A673 (cell line): ENCODE measurements at regions of chr9 and their contacts with region 1.

Region 1: DNA sequence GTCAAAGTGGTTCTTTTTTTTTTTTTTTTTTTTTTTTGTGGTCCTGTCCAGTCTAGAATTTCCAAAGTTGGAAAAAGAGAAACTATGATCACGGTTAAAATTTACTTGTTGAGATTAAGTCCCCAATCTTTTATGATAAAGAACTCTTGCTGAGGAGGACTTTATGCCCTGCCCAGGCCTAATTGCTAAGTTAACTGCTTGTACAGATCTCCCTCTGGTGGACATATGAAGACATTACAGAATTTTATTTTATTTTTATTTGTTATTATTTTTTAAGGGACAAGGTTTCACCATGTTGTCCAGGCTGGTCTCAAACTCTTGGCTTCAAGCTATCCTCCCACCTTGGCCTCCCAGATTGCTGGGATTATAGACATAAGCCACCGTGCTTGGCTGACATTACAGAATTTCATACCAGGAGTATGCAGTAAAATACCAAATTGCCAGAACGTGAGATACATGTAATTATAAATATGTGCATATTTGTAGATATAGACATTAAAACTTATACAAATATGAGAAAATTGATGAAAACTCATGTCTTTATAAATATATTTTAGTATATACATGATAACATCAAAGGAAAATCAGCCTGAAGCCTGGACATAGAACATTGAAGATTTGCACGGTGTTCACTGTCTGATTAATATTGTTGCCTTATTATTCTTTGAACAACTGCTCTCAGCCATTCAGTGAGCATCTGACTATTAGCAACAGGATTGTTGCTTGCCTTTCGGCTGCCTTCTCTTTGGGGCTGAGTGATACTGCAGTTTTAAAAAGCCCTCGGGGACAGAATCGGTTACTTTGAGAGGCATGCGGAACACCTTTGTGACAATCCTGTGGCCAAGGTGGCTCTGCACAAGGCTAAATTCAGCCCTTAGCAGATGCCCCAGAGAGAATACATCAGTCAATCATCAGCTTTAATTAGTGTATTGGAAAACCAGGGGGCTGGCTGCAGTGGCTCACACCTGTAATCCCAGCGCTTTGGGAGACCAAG is 91.0 kb downstream of the RFK start:
- DNase-seq: peak; percentile 60
- H3K4me3 ChIP-seq: no peak overlapping the region
- H3K27ac ChIP-seq: no peak overlapping the region
- H3K4me1 ChIP-seq: no peaks in the 10 kb centered on the region
- H3K27me3 ChIP-seq: peaks cover 12% of the 10 kb centered on the region
- CTCF ChIP-seq: peak; percentile 64

Region 2: DNA sequence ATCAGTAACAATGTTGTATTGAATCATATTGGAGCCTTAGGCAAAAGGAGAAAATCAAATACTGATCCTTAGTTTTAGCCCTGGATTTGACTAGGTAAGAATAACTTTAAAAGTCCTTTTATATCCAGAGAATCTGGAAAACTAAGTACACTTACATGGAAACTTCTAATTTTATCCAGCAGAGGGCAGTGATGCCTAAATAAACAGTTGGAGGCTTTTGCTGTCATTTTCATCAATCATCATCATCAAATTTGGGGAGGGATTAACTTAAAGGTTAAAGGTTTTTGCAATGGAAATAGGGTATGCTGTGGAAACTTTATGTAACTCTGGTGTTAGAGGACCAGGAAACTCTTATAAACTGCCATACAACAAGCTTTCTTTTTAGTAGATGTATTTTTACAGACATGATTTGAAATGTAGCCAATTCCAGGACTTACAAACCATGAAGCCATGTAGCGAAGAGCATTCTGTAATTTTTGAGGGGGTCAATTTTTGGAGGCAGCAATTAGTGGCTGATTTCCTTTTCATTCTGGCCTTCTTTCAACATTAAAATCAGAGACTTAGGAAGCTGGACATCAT is 1102.3 kb before region 1 on chr9:
- CTCF ChIA-PET with region 1: no interaction called
- POLR2A ChIA-PET with region 1: no interaction called
- intact Hi-C with region 1: loop called (anchors 2 kb)
- DNase-seq: peak; percentile 57
- H3K4me3 ChIP-seq: no peak overlapping the region
- H3K27ac ChIP-seq: no peak overlapping the region
- H3K4me1 ChIP-seq: no peaks in the 10 kb centered on the region
- H3K27me3 ChIP-seq: peaks cover 4% of the 10 kb centered on the region
- CTCF ChIP-seq: peak; percentile 70

Region 3: DNA sequence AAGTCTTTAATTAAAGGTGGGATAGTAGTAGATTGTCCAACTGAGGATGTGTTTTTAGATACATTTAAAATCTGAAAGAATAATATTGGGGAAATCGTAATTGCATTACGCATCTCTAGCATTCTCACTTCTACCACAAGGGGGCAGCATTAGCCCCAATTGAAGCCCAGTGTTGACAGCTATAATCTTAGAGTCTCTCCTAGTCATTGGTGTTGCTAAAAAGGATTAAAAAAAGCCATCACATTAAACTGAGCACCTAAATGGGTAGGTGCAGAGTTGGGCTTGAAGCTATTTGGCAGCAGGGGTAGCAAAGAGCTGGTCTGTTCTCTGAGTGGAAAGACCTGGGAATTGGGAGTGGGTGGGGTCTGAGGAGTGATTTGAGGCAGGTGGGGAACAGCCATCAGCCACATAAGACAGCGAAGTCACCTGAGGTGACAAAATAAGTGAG is 1037.7 kb before region 1 on chr9:
- CTCF ChIA-PET with region 1: no interaction called
- POLR2A ChIA-PET with region 1: no interaction called
- intact Hi-C with region 1: loop called (anchors 5 kb)
- DNase-seq: peak; percentile 67
- H3K4me3 ChIP-seq: no peak overlapping the region
- H3K27ac ChIP-seq: no peak overlapping the region
- H3K4me1 ChIP-seq: no peaks in the 10 kb centered on the region
- H3K27me3 ChIP-seq: no peaks in the 10 kb centered on the region
- CTCF ChIP-seq: peak; percentile 89

Region 4: GRCh38 chr9:75775166-75775565 is 528.1 kb before region 1 on chr9:
- CTCF ChIA-PET with region 1: no interaction called
- POLR2A ChIA-PET with region 1: no interaction called
- intact Hi-C with region 1: no loop called
- DNase-seq: no peak
- H3K4me3 ChIP-seq: no peak overlapping the region
- H3K27ac ChIP-seq: no peak overlapping the region
- H3K4me1 ChIP-seq: no peaks in the 10 kb centered on the region
- H3K27me3 ChIP-seq: no peaks in the 10 kb centered on the region
- CTCF ChIP-seq: no peak

Region 5: DNA sequence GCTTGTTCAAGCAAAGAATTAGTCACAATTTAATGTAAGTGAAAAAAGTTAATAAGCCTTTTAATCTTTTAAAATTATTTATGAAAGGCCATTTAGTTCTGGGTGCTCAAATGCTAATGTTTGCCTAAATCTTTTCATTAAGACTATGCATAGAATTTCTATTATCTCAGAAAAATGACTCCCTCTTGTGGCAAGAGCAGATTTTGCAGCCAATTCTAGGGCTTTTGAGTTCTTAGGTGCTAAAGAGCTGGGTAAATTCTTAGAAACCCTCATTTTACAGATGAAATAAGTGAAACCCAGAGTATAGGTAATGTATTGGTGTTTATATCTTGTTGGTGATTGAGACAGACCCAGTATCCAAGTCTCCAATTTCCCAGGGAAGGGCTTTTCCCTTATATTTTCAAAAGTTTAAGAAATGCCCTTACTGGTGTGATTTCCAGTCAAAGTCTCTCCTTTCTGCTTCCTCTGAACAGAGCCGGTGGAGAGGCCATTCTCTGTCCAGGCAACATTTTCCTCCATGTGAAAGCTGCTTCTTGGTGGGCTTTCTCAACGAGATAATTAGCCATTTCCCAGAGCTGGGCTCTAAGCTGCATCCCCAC is 436.9 kb before region 1 on chr9:
- CTCF ChIA-PET with region 1: interaction called, 3 read pairs
- POLR2A ChIA-PET with region 1: no interaction called
- intact Hi-C with region 1: loop called (anchors 10 kb)
- DNase-seq: peak; percentile 56
- H3K4me3 ChIP-seq: no peak overlapping the region
- H3K27ac ChIP-seq: no peak overlapping the region
- H3K4me1 ChIP-seq: no peaks in the 10 kb centered on the region
- H3K27me3 ChIP-seq: no peaks in the 10 kb centered on the region
- CTCF ChIP-seq: peak; percentile 78

Region 6: GRCh38 chr9:75890472-75891276 is 412.6 kb before region 1 on chr9 and contains the start of gene PCSK5:
- CTCF ChIA-PET with region 1: no interaction called
- POLR2A ChIA-PET with region 1: no interaction called
- intact Hi-C with region 1: loop called (anchors 10 kb)
- DNase-seq: peak; percentile 86
- H3K4me3 ChIP-seq: peak within 1 kb of the TSS; percentile 48
- H3K27ac ChIP-seq: no peak within 1 kb of the TSS
- H3K4me1 ChIP-seq: no peaks in the 10 kb centered on the region
- H3K27me3 ChIP-seq: peaks cover 79% of the 10 kb centered on the region
- CTCF ChIP-seq: no peak
- total RNA-seq, gene PCSK5: 0.17 and 0.26 TPM in 2 replicates

Region 7: GRCh38 chr9:75988663-75989062 is 314.6 kb before region 1 on chr9:
- CTCF ChIA-PET with region 1: no interaction called
- POLR2A ChIA-PET with region 1: no interaction called
- intact Hi-C with region 1: loop called (anchors 10 kb)
- DNase-seq: no peak
- H3K4me3 ChIP-seq: no peak overlapping the region
- H3K27ac ChIP-seq: no peak overlapping the region
- H3K4me1 ChIP-seq: no peaks in the 10 kb centered on the region
- H3K27me3 ChIP-seq: no peaks in the 10 kb centered on the region
- CTCF ChIP-seq: no peak

Region 8: DNA sequence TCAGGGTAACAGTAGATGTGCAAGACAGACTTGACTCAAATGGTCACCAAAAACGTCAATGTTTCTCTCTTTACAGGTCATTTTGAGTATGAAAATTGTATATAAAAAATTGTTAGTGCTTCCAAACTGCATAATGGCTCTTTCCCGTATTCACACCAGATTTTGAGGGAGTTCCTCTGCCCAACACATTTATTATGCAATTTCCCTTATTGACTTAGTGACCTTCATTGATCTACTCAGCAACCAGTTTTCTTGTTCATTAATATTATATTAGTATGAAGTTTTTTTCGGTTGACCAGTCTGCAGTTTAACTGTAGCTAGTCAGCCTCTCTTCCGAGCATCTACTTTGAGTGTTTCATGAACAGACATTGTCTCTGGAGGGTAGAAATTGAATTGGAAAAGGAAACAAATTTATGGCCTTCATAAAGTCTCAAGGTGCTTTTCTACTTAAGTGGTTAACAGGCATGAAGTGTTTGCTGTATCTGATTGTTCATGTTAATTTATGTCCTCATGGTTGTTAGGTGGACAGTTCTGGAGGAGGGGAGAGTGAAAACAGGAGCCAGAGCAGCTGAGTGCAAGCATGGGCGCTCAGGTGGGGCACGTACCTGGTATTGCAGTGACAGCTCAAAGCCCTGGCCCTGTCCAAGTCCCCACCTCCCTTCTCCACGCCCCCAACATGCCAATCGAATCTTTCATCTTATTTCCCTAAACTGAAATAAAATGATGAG is 149.2 kb before region 1 on chr9:
- CTCF ChIA-PET with region 1: no interaction called
- POLR2A ChIA-PET with region 1: no interaction called
- intact Hi-C with region 1: no loop called
- DNase-seq: no peak
- H3K4me3 ChIP-seq: no peak overlapping the region
- H3K27ac ChIP-seq: no peak overlapping the region
- H3K4me1 ChIP-seq: no peaks in the 10 kb centered on the region
- H3K27me3 ChIP-seq: peaks cover 43% of the 10 kb centered on the region
- CTCF ChIP-seq: no peak

Region 9: GRCh38 chr9:76369583-76369982 is 66.3 kb after region 1 on chr9:
- CTCF ChIA-PET with region 1: no interaction called
- POLR2A ChIA-PET with region 1: no interaction called
- intact Hi-C with region 1: loop called (anchors 10 kb)
- DNase-seq: no peak
- H3K4me3 ChIP-seq: no peak overlapping the region
- H3K27ac ChIP-seq: no peak overlapping the region
- H3K4me1 ChIP-seq: no peaks in the 10 kb centered on the region
- H3K27me3 ChIP-seq: no peaks in the 10 kb centered on the region
- CTCF ChIP-seq: no peak